Astrocyte of the cerebellum (primary cell): ENCODE measurements at regions of chr9 and their contacts with region 1.

Region 1: GRCh38 chr9:2727966-2728613 is 10.8 kb downstream of the KCNV2 start:
- DNase-seq: peak; percentile 64
- H3K4me3 ChIP-seq: no peak overlapping the region
- CTCF ChIP-seq: peak; percentile 88

Region 2: GRCh38 chr9:2616692-2617377 is 111.3 kb before region 1 on chr9:
- in situ Hi-C with region 1: no loop called
- DNase-seq: no peak
- H3K4me3 ChIP-seq: no peak overlapping the region
- CTCF ChIP-seq: no peak

Region 3: DNA sequence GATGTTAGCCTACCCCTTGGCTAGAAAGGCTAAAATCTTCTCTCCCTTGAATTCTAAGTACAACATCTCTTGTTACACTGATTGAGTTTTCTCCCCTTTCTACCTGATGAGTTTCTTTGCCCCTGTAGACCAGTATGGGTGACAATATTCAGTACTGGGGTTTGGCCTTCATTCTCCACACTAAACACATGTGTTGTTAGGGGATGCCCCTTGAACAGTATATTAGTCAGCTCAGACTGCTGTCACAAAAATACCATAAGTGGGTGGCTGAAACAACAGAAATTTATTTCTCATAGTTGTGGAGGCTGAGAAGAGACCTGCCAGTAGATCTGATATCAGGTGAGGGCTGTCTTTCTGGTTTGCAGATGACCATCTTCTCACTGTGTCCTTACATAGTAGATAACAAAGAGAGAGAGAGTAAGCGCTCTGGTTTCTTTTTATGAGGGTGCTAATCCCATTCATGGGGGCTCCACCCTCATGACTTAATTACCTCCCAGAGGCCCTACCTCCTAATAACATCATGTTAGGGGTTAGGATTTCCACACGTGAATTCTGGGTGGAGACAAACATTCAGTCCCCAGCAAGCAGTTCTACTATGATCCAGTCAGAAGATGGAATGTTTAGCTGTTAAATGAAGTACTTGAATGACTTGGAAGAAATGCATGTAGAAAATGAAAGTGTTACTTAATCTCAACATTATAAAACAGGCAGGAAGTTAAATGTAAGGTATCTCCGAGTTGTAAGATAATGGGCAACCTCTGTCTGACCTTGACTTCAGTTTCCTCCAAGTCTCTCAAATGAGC is 89.0 kb before region 1 on chr9:
- in situ Hi-C with region 1: loop called (anchors 25 kb)
- DNase-seq: no peak
- H3K4me3 ChIP-seq: no peak overlapping the region
- CTCF ChIP-seq: no peak

Region 4: GRCh38 chr9:2764353-2764752 is 36.3 kb after region 1 on chr9:
- in situ Hi-C with region 1: no loop called
- DNase-seq: no peak
- H3K4me3 ChIP-seq: no peak overlapping the region
- CTCF ChIP-seq: no peak